Astrocyte of the cerebellum (primary cell): ENCODE measurements at regions of chr2 and their contacts with region 1.

Region 1: DNA sequence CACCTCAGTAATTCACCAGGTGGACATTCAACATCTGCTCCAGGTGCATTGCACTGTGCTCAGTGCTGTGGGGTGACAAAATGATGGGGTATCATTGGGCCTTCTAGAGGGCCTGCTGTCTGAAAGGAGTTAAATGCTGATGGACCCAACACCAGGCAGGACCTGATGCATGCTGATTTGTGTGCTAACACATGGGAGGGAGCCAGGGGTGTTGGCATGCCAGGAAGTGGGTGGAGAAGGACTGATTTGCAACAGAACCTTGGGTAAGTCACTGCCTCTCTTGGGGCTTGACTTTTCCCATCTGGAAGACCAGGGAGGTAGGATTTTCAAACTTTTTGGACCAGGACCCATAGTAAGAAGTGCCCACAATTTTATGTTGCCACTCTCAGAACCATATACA is 57.9 kb upstream of the CXCR4 start:
- DNase-seq: no peak
- H3K4me3 ChIP-seq: no peak overlapping the region
- CTCF ChIP-seq: no peak

Region 2: DNA sequence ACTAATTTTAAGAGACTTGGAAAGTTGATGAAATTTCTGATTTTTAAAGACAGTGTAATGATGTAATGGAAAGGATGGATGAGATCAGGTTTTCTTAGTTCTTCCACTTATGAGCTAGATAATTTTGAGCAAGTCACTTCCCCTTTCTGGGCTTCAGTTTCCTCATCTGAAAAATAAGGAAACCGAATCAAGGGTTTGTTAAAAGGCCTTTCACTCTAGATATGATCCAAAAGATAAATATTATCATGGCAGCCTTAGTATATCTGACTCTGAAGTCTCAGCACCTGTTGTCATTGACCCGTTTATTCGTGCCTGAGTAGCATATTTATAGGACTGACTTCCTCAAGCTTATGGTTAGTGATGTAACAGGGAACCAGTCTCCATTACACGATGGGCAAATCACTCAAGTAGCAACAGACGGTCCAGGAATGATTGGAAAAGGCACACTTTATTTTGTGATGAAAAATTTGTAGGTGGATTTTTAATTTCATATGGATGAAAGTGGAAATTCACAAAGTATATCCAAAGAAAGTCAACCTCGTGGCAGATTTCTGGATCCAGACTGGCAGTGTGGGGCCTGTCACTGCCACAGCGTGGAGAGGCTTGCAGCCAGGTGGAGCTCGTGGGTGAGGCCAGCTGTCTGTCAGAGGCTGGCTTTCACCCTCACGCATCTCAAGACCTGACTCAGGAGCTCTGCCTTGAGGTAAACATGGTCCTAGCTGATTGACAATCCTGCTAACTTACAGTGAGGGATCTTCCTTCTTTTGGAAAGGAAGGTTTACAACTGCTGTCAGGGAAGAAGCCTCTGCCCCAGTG is 80.0 kb after region 1 on chr2:
- in situ Hi-C with region 1: loop called (anchors 5 kb)
- DNase-seq: no peak
- H3K4me3 ChIP-seq: no peak overlapping the region
- CTCF ChIP-seq: no peak